Activated CD4-positive, alpha-beta T cell treated with anti-CD3 and anti-CD28 coated beads, Interleukin-2, amount 10 ng/mL, durations not matched to agents 24 days and 14 days (primary cell): ENCODE measurements at regions of chr12 and their contacts with region 1.

Region 1: DNA sequence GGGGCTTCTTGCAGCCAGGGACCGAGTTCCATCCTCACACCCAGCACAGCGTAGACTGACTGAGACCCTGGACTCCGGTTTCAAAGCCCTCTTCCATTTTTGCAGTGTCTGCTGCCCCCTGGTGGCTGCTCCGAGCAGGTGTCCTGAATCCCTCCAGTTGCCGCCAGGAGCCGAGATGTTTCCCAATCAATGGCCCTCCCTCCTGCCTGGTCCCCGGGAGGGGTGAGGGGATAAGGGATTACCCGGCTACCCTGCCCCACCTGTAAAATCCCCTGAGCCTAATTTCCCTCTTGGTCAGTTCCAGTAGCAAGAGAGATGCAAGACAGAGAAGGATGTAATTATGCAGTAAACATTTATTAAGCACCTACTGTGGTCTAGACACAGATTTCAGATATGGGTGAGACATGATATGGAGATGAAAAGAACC is 55.0 kb downstream of the PHETA1 start:
- DNase-seq: peak; percentile 89
- H3K4me3 Mint-ChIP-seq: no peak overlapping the region
- H3K27ac Mint-ChIP-seq: no peak overlapping the region
- H3K4me1 Mint-ChIP-seq: peaks cover 7% of the 10 kb centered on the region
- H3K27me3 Mint-ChIP-seq: peaks cover 6% of the 10 kb centered on the region

Region 2: DNA sequence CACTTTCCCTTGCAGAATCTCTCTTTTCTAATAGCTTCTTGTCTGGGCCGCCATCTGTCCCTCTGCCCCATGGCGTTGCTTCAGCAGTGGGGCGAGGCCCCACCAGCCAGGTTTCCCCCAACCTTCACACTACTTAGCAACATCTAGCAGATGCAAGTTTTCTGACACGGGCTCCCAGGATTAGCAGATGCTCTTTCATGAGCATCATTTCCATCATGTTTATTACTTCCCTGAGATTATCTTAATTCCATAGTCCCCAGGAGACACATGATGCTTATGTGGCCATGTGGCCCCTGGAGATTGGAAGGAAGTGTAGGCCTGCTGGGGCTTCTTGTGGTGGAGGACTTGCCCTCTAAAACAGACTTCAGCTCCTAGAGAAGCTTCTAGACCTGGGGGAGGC is 291.5 kb before region 1 on chr12:
- intact Hi-C with region 1: loop called (anchors 2 kb)
- DNase-seq: no peak
- H3K4me3 Mint-ChIP-seq: no peak overlapping the region
- H3K27ac Mint-ChIP-seq: no peak overlapping the region
- H3K4me1 Mint-ChIP-seq: peaks cover 2% of the 10 kb centered on the region
- H3K27me3 Mint-ChIP-seq: peaks cover 23% of the 10 kb centered on the region